ENCODE measurements at regions of chr11 and their contacts with region 1.

Region 1: GRCh38 chr11:71180694-71181470 is 71.5 kb downstream of the SHANK2 start:
- DNase-seq: no peak
- H3K4me3 ChIP-seq: no peak overlapping the region
- H3K27ac ChIP-seq: no peak overlapping the region
- H3K4me1 ChIP-seq: peaks cover 0 to 8% (median 0%) of the 10 kb centered on the region in 4 donors
- H3K27me3 ChIP-seq: no peaks in the 10 kb centered on the region
- CTCF ChIP-seq: no peak
- EP300 ChIP-seq: no peak
- POLR2A ChIP-seq: no peak

Region 2: DNA sequence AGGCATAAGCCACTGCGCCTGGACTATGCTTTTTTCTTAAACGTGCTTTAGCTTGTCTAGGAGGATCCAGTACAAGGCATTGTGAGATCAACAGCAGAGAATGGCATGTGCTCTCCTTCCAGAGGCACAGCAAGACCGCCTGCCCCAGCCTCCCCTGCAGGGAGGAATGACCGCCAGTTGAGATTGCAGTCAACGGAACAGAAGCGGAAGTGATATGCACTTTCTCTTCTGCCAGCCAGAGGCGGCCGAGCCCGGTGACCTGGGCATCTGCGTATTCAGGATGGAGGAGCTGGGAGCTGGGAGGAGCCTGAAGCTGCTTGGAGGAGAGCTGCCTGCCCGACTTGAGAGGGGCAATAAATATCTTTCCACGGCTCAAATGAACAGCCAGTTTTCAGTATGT is 539.5 kb before region 1 on chr11:
- in situ Hi-C with region 1: no loop called
- intact Hi-C with region 1: no loop called
- DNase-seq: no peak
- H3K4me3 ChIP-seq: no peak overlapping the region
- H3K27ac ChIP-seq: no peak overlapping the region
- H3K4me1 ChIP-seq: no peaks in the 10 kb centered on the region
- H3K27me3 ChIP-seq: no peaks in the 10 kb centered on the region
- CTCF ChIP-seq: no peak
- EP300 ChIP-seq: no peak
- POLR2A ChIP-seq: no peak

Region 3: GRCh38 chr11:71103266-71103665 is 77.6 kb before region 1 on chr11:
- in situ Hi-C with region 1: no loop called
- intact Hi-C with region 1: no loop called
- DNase-seq: no peak
- H3K4me3 ChIP-seq: no peak overlapping the region
- H3K27ac ChIP-seq: no peak overlapping the region
- H3K4me1 ChIP-seq: no peaks in the 10 kb centered on the region
- H3K27me3 ChIP-seq: no peaks in the 10 kb centered on the region
- CTCF ChIP-seq: no peak
- EP300 ChIP-seq: no peak
- POLR2A ChIP-seq: no peak

Region 4: DNA sequence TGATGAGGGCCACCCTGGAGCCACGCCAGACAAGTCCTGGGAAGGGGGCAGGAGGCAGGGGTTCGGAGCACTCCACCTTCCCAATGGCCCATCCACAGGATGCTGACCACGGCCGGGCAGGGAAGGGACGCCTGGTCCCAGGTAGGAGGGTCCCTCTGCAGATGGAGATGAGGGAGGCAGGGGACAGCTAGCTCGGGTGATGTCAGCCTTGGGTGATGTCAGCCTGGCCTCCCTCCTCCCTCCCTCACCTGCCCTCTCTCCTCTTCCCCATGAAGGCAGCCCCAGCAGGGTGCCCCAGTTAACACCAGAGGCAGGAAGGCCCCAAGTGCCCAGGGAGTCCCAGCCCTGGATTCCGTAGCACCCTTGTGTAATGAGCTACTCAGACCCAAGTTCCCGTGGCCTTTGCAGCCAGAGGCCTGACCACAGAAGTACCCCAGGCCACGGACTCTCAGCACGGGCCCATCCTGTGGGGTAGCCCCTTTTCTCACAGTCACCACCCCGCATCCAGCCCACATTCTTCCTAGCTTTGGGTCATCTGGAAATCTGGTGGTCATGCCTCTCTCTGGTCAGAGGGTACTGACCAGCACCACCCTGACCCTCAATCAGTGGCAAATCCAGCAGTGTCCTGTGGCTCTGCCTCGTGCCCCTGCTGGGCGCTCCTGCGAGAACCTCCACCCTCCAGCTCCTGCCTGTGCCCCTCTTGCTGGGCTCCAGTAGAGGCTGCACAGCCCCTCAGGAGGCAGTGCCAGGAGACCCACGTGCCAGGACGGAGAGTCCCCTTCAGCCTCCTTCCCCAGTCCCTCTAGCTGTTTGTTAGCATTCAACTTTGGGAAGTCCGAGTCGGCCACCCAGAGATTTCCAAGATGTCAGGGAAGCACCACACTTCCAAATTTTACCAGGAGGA is 24.1 kb after region 1 on chr11:
- in situ Hi-C with region 1: no loop called
- intact Hi-C with region 1: loop called (anchors 1 kb)
- DNase-seq: no peak
- H3K4me3 ChIP-seq: no peak overlapping the region
- H3K27ac ChIP-seq: no peak overlapping the region
- H3K4me1 ChIP-seq: peaks cover 0 to 11% (median 5%) of the 10 kb centered on the region in 4 donors
- H3K27me3 ChIP-seq: no peaks in the 10 kb centered on the region
- CTCF ChIP-seq: no peak
- EP300 ChIP-seq: no peak
- POLR2A ChIP-seq: no peak

Region 5: DNA sequence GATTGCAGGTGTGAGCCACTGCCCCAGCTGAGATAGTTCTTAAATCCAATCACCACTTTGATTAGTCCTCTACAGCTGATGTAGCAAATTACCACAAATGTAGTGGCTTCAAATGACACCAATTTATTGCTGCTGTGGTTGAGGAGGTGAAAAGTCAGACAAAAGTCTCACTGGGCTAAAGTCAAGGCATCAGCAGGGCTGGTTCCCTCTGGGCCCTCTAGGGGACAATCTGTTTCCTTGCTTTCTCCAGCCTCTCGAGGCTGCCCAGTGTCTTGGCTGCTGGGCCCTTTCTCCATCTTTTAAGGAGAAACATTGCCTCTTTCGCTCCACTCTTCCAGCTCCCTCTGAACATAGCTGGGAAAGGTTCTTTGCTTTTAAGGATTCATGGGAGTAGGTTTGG is 122.0 kb after region 1 on chr11:
- in situ Hi-C with region 1: no loop called
- intact Hi-C with region 1: no loop called
- DNase-seq: no peak
- H3K4me3 ChIP-seq: no peak overlapping the region
- H3K27ac ChIP-seq: no peak overlapping the region
- H3K4me1 ChIP-seq: no peaks in the 10 kb centered on the region
- H3K27me3 ChIP-seq: no peaks in the 10 kb centered on the region
- CTCF ChIP-seq: no peak
- EP300 ChIP-seq: no peak
- POLR2A ChIP-seq: no peak